ENCODE measurements at regions of chr7 and their contacts with region 1.

Region 1: GRCh38 chr7:47763063-47763974 is 181.4 kb upstream of the TNS3 start:
- DNase-seq: peak; percentile 92 to 96
- H3K4me3 ChIP-seq: no peak overlapping the region
- H3K4me3 Mint-ChIP-seq: peak overlapping the region; percentile 70
- H3K27ac Mint-ChIP-seq: peak overlapping the region; percentile 98
- H3K4me1 ChIP-seq: peaks cover 44% of the 10 kb centered on the region
- H3K4me1 Mint-ChIP-seq: peaks cover 34% of the 10 kb centered on the region
- H3K27me3 ChIP-seq: no peaks in the 10 kb centered on the region
- H3K27me3 Mint-ChIP-seq: no peaks in the 10 kb centered on the region
- CTCF ChIP-seq: no peak

Region 2: GRCh38 chr7:46900312-46901263 is 862.7 kb before region 1 on chr7:
- CTCF ChIA-PET with region 1: no interaction called
- POLR2A ChIA-PET with region 1: no interaction called
- intact Hi-C with region 1: no loop called
- DNase-seq: no peak
- H3K4me3 ChIP-seq: no peak overlapping the region
- H3K4me3 Mint-ChIP-seq: no peak overlapping the region
- H3K27ac Mint-ChIP-seq: no peak overlapping the region
- H3K4me1 ChIP-seq: no peaks in the 10 kb centered on the region
- H3K4me1 Mint-ChIP-seq: no peaks in the 10 kb centered on the region
- H3K27me3 ChIP-seq: no peaks in the 10 kb centered on the region
- H3K27me3 Mint-ChIP-seq: peaks cover 4% of the 10 kb centered on the region
- CTCF ChIP-seq: no peak

Region 3: DNA sequence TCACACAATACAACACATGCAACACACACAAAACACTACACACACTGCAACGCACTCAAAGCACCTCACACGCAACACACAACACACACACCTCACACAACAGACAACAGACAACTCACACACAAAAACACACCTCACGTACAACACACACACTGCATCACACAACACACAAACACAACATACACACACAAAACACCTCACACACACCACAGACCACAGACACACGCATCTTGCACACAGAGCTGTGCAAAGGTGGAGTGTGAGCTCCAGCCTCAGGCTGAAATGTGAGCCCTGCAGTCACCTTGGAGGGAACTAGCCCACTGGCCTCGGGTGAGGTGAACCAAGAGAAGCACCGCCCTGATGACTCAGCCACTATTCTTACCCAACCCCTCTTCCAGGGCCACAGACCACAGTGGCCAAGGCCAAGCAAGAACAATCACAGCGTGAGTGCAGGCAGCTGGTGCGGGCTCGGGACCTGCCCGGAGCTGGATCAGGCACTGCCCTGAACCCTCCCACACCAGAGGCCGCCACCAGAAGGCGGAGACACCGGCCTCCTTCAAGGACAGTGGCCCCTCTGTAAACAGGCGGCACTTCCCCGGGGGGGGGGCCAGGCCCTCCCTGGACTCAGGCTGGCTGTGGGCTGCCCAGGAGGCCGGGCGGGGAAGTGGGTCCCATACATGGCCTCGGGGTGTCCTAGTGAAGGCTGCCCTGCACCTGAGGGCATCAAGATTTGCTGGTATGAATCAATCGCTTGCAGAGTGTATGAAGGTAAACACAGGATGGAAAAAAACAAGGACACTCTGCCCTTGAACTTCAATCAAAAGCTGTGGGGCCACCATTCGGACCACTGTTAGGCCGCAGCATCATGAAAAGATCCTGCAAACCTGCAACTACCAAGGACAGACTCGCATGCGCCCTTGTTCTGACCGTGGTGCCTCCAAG is 288.1 kb before region 1 on chr7:
- CTCF ChIA-PET with region 1: no interaction called
- POLR2A ChIA-PET with region 1: no interaction called
- intact Hi-C with region 1: loop called (anchors 5 kb)
- DNase-seq: peak; percentile 84 to 92
- H3K4me3 ChIP-seq: no peak overlapping the region
- H3K4me3 Mint-ChIP-seq: no peak overlapping the region
- H3K27ac Mint-ChIP-seq: no peak overlapping the region
- H3K4me1 ChIP-seq: peaks cover 63% of the 10 kb centered on the region
- H3K4me1 Mint-ChIP-seq: peaks cover 32% of the 10 kb centered on the region
- H3K27me3 ChIP-seq: no peaks in the 10 kb centered on the region
- H3K27me3 Mint-ChIP-seq: no peaks in the 10 kb centered on the region
- CTCF ChIP-seq: no peak

Region 4: DNA sequence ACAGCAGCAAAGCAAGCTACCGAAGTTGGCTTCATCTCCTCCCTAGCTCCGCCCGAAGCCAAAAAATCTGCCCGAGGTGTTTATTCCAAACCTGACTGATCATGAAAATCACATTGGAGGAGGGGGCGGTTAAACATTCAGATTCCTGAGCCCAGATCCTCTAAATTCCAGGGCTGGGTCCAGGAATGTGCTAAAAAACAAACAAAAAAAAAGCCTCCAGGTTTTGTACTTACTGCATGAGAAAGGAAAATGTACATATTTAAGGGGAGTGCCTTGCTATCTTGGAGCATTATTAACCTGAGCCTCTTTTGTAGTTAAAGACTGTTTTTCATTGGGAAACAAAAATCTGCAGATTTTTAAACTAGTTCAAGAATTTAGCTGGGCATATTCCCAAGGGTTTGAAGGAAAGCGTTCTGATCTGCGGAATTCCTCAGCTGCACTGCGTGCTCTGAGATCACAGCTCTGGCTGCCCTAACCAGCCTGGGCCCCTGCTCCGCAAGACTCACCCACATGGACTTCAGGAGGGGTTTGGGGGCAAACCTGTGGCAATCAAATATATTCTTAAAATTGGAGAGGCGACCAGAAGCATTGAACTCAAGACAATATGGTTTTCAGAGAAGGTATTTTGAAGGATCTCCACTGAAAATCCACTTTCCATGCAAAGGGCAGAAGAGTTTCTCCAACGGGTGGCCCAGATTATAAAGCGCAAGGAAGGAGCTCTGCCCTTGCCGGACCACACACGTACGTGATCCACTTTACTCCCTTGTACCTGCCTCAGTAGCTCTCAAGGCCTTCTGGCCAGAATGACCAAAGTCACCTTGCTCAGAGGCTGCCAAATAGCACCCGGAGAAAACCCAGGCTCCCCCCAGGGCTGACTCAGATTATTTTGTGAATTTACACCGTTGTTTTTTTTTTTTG is 171.4 kb before region 1 on chr7:
- CTCF ChIA-PET with region 1: interaction called, 4 read pairs
- POLR2A ChIA-PET with region 1: interaction called, 4 read pairs
- intact Hi-C with region 1: loop called (anchors 1 kb)
- DNase-seq: peak; percentile 87 to 92
- H3K4me3 ChIP-seq: 0 out of 2 replicates have a peak overlapping the region, but pooled peaks have one; percentile 9
- H3K4me3 Mint-ChIP-seq: peak overlapping the region; percentile 65
- H3K27ac Mint-ChIP-seq: peak overlapping the region; percentile 86
- H3K4me1 ChIP-seq: peaks cover 64% of the 10 kb centered on the region
- H3K4me1 Mint-ChIP-seq: peaks cover 41% of the 10 kb centered on the region
- H3K27me3 ChIP-seq: no peaks in the 10 kb centered on the region
- H3K27me3 Mint-ChIP-seq: no peaks in the 10 kb centered on the region
- CTCF ChIP-seq: no peak

Region 5: GRCh38 chr7:47622946-47623640 is 140.2 kb before region 1 on chr7:
- CTCF ChIA-PET with region 1: no interaction called
- POLR2A ChIA-PET with region 1: no interaction called
- intact Hi-C with region 1: loop called (anchors 1 kb)
- DNase-seq: peak; percentile 56 to 79
- H3K4me3 ChIP-seq: no peak overlapping the region
- H3K4me3 Mint-ChIP-seq: peak overlapping the region; percentile 16
- H3K27ac Mint-ChIP-seq: peak overlapping the region; percentile 77
- H3K4me1 ChIP-seq: peaks cover 57% of the 10 kb centered on the region
- H3K4me1 Mint-ChIP-seq: peaks cover 37% of the 10 kb centered on the region
- H3K27me3 ChIP-seq: no peaks in the 10 kb centered on the region
- H3K27me3 Mint-ChIP-seq: no peaks in the 10 kb centered on the region
- CTCF ChIP-seq: no peak

Region 6: GRCh38 chr7:47677667-47678111 is 85.6 kb before region 1 on chr7:
- CTCF ChIA-PET with region 1: no interaction called
- POLR2A ChIA-PET with region 1: interaction called, 3 read pairs
- intact Hi-C with region 1: loop called (anchors 1 kb)
- DNase-seq: no peak
- H3K4me3 ChIP-seq: no peak overlapping the region
- H3K4me3 Mint-ChIP-seq: no peak overlapping the region
- H3K27ac Mint-ChIP-seq: peak overlapping the region; percentile 48
- H3K4me1 ChIP-seq: peaks cover 29% of the 10 kb centered on the region
- H3K4me1 Mint-ChIP-seq: peaks cover 47% of the 10 kb centered on the region
- H3K27me3 ChIP-seq: no peaks in the 10 kb centered on the region
- H3K27me3 Mint-ChIP-seq: no peaks in the 10 kb centered on the region
- CTCF ChIP-seq: no peak

Region 7: GRCh38 chr7:47734287-47734948 is 28.9 kb before region 1 on chr7:
- CTCF ChIA-PET with region 1: no interaction called
- POLR2A ChIA-PET with region 1: no interaction called
- intact Hi-C with region 1: loop called (anchors 1 kb)
- DNase-seq: peak; percentile 30 to 51
- H3K4me3 ChIP-seq: no peak overlapping the region
- H3K4me3 Mint-ChIP-seq: no peak overlapping the region
- H3K27ac Mint-ChIP-seq: no peak overlapping the region
- H3K4me1 ChIP-seq: peaks cover 28% of the 10 kb centered on the region
- H3K4me1 Mint-ChIP-seq: peaks cover 32% of the 10 kb centered on the region
- H3K27me3 ChIP-seq: no peaks in the 10 kb centered on the region
- H3K27me3 Mint-ChIP-seq: no peaks in the 10 kb centered on the region
- CTCF ChIP-seq: no peak

Region 8: GRCh38 chr7:47786557-47787248 is 23.4 kb after region 1 on chr7:
- CTCF ChIA-PET with region 1: interaction called, 8 read pairs
- POLR2A ChIA-PET with region 1: interaction called, 5 read pairs
- intact Hi-C with region 1: loop called (anchors 2 kb)
- DNase-seq: peak; percentile 80 to 90
- H3K4me3 ChIP-seq: no peak overlapping the region
- H3K4me3 Mint-ChIP-seq: peak overlapping the region; percentile 25
- H3K27ac Mint-ChIP-seq: peak overlapping the region; percentile 95
- H3K4me1 ChIP-seq: peaks cover 56% of the 10 kb centered on the region
- H3K4me1 Mint-ChIP-seq: peaks cover 43% of the 10 kb centered on the region
- H3K27me3 ChIP-seq: no peaks in the 10 kb centered on the region
- H3K27me3 Mint-ChIP-seq: no peaks in the 10 kb centered on the region
- CTCF ChIP-seq: no peak

Region 9: DNA sequence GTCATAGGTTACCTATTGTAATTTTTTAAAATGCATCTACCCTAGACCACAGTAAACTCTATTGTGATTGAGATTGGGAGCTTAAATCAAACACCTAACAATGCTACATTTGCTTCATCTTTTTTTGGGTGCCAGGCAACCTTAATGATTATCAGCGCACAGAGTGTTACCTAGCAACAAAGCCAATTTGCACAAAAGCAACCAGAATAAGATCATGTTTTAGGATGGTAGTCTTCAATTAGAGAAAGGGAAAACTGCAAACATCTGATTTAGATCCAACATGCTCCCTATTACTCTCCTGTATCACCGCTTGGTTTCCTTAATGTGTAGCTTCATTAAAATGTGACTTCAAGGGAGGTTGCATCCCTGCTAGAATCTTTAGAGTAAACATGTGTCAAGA is 634.9 kb after region 1 on chr7:
- CTCF ChIA-PET with region 1: no interaction called
- POLR2A ChIA-PET with region 1: no interaction called
- intact Hi-C with region 1: no loop called
- DNase-seq: no peak
- H3K4me3 ChIP-seq: no peak overlapping the region
- H3K4me3 Mint-ChIP-seq: no peak overlapping the region
- H3K27ac Mint-ChIP-seq: no peak overlapping the region
- H3K4me1 ChIP-seq: no peaks in the 10 kb centered on the region
- H3K4me1 Mint-ChIP-seq: no peaks in the 10 kb centered on the region
- H3K27me3 ChIP-seq: peaks cover 2% of the 10 kb centered on the region; the same call in 1 of the 2 replicates
- H3K27me3 Mint-ChIP-seq: peaks cover 11% of the 10 kb centered on the region
- CTCF ChIP-seq: no peak

Measured in Caco-2 (cell line).